PC-9 (cell line): ENCODE measurements at regions of chr5 and their contacts with region 1.

Region 1: DNA sequence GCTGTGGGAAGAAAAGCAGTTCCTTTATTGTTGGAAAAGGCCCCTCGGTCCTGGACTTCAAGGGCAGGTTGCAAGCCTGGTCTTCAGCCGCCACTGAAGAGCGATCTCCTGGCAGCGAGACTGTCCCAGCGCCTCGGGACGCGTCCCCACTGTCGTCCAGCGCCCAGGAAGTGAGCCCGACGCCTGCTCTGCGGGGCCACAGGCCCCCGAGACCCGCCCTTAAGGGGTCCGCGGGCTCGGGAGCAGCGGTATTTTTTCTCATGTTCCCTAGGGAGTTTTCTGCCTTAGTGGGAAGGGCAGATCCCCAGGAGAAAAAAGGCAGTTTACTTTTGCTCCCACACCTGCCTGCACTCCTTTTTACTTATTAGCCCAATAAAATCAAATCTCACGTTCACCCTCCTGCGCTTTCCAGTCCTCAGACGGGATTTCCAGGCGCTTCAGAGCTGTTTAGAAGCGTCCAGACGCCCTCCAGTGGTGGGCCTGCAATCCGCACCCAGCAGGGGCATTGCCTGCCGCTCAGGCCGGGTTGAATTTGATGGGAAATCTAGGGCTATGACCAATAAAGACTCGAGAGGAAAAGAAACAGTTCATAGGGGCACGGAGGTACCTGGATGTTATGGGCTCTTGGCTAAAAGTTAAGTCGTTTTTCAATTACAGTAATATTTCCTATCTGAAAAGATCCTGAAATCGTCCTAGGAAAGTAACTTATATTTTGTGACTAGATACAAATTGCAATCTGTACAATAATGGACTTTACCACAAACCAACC is 2.8 kb upstream of the EFNA5 start:
- DNase-seq: peak; percentile 84 to 88
- H3K4me3 ChIP-seq: peak overlapping the region; percentile 72
- H3K27ac ChIP-seq: peak overlapping the region; percentile 90
- H3K4me1 ChIP-seq: peaks cover 17% of the 10 kb centered on the region
- H3K27me3 ChIP-seq: no peaks in the 10 kb centered on the region
- CTCF ChIP-seq: peak; percentile 95

Region 2: GRCh38 chr5:105849701-105850100 is 1823.9 kb before region 1 on chr5:
- CTCF ChIA-PET with region 1: interaction called, 12 read pairs
- POLR2A ChIA-PET with region 1: no interaction called
- intact Hi-C with region 1: no loop called
- DNase-seq: no peak
- H3K4me3 ChIP-seq: no peak overlapping the region
- H3K27ac ChIP-seq: no peak overlapping the region
- H3K4me1 ChIP-seq: no peaks in the 10 kb centered on the region
- H3K27me3 ChIP-seq: no peaks in the 10 kb centered on the region
- CTCF ChIP-seq: no peak

Region 3: DNA sequence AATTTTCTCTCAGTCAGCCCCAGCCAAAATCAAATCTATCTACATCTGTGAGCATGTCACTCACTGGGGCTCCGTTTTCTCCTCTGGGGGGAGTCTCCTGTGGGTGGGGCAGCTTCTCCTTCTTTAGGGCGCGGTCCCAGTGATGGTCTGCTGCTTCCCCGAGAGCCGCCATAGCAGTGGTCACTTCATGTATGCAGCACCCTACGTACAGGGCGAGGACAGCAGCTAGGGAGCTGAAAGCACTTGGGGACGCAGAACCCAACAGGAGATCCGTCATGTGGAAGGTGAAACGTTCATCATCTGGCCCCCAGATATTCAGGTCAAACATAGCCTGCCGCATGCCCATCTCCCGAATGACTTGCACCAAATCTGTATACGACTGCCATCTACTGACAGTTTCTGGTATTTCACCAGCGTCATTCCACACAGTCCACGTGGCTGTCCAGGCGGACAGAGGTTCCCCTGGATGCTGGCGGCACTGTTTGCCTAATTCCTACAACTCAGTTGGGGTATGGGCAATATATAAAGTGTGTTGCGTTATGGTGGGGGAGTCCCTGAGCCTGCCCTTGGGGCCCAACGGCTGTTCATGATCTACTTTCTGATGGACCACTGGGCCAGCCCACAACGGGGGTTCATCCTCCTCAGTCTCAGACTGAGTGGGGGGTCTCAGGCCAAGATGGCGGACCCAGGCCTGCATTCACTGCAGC is 797.8 kb before region 1 on chr5:
- CTCF ChIA-PET with region 1: no interaction called
- POLR2A ChIA-PET with region 1: no interaction called
- intact Hi-C with region 1: loop called (anchors 10 kb)
- DNase-seq: peak in 1 of 2 experiments; percentile 12
- H3K4me3 ChIP-seq: no peak overlapping the region
- H3K27ac ChIP-seq: no peak overlapping the region
- H3K4me1 ChIP-seq: no peaks in the 10 kb centered on the region
- H3K27me3 ChIP-seq: no peaks in the 10 kb centered on the region
- CTCF ChIP-seq: peak; percentile 62

Region 4: GRCh38 chr5:107248066-107248695 is 425.4 kb before region 1 on chr5:
- CTCF ChIA-PET with region 1: no interaction called
- POLR2A ChIA-PET with region 1: no interaction called
- intact Hi-C with region 1: loop called (anchors 1 kb)
- DNase-seq: peak; percentile 40 to 52
- H3K4me3 ChIP-seq: no peak overlapping the region
- H3K27ac ChIP-seq: no peak overlapping the region
- H3K4me1 ChIP-seq: no peaks in the 10 kb centered on the region
- H3K27me3 ChIP-seq: no peaks in the 10 kb centered on the region
- CTCF ChIP-seq: peak; percentile 89

Region 5: DNA sequence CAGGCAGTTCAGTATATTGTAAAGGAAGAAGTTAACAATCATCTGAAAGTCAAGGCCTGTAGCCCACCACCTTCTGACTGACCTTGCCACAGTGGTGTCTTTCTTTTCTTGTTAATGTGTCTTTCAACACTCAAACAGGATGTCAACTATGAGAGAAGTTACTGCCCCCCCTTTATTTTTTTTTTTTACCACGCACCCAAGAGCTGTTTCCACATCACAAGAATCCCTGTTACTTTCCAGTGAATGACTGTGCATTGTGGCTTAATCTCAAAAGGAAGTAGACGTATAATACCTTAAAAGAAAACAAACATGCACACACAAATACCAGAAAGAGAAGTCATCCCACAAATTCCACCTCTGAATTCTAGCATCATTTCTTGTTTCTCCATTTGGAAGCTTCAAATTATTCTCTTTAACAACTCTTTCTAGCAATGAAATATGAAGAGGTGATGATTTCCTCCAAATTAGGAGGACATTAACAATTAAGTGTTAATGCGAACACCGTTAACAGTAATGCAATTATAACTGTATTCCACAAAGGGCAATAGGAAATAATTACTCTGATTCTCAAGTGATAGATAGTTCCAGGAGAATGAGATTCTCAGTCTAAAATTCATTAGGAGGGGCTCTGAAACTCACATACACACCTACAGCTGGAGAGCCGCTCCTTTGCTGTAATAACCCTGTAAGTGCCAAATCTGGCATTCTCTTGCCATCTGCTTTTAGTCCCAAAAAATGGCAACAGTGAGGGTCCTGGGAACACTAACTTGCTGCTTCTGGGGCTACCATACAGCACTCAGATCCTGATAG is 203.9 kb before region 1 on chr5:
- CTCF ChIA-PET with region 1: no interaction called
- POLR2A ChIA-PET with region 1: interaction called, 3 read pairs
- intact Hi-C with region 1: loop called (anchors 1 kb)
- DNase-seq: peak; percentile 46 to 98
- H3K4me3 ChIP-seq: peak overlapping the region; percentile 22; the same call in 1 of the 2 replicates
- H3K27ac ChIP-seq: peak overlapping the region; percentile 96
- H3K4me1 ChIP-seq: peaks cover 94% of the 10 kb centered on the region
- H3K27me3 ChIP-seq: no peaks in the 10 kb centered on the region
- CTCF ChIP-seq: no peak

Region 6: GRCh38 chr5:107557051-107557658 is 116.4 kb before region 1 on chr5:
- CTCF ChIA-PET with region 1: interaction called, 6 read pairs
- POLR2A ChIA-PET with region 1: interaction called, 47 read pairs
- intact Hi-C with region 1: loop called (anchors 1 kb)
- DNase-seq: peak; percentile 95 to 99
- H3K4me3 ChIP-seq: peak overlapping the region; percentile 38; the same call in 1 of the 2 replicates
- H3K27ac ChIP-seq: peak overlapping the region; percentile 96
- H3K4me1 ChIP-seq: peaks cover 65% of the 10 kb centered on the region
- H3K27me3 ChIP-seq: no peaks in the 10 kb centered on the region
- CTCF ChIP-seq: no peak